ENCODE measurements at regions of chr1 and their contacts with region 1.

Region 1: GRCh38 chr1:79197421-79197820 is 190.9 kb upstream of the ADGRL4 start:
- DNase-seq: no peak
- ATAC-seq: no peak
- H3K4me3 ChIP-seq: no peak overlapping the region
- H3K27ac ChIP-seq: no peak overlapping the region
- H3K4me1 ChIP-seq: no peaks in the 10 kb centered on the region
- H3K27me3 ChIP-seq: no peaks in the 10 kb centered on the region
- CTCF ChIP-seq: peak in 4 of 5 experiments; percentile 11 to 35 (median 20)
- POLR2A ChIP-seq: no peak

Region 2: DNA sequence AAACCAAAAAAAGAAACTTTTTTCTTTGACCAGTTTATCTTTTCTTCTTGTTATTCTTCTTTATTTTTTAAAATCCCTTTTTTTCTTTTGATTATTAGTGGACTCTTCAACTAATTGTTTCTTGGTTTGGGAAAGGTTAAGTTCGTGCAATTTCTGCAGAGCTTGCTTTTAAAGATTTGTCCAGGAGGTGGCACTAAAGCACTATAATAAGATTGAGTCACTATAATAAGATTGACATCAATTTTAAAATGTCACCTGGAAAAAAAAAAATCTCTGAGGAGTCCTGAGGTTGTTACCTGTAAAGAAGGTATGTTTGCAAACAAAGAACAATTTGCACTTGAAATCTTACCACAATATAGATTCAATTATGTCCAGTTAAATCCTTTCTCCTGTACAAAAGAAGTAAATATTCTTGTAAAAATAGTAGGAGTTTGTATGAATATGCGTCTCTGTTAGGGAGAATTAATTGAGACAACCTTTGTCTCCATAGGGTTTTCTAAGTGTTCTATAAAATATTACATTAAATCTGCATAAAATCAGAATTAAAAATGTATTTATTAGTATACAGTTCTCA is 357.6 kb before region 1 on chr1:
- in situ Hi-C with region 1: no loop called
- intact Hi-C with region 1: loop called (anchors 5 kb)
- DNase-seq: no peak
- ATAC-seq: no peak
- H3K4me3 ChIP-seq: no peak overlapping the region
- H3K27ac ChIP-seq: no peak overlapping the region
- H3K4me1 ChIP-seq: no peaks in the 10 kb centered on the region
- H3K27me3 ChIP-seq: no peaks in the 10 kb centered on the region
- CTCF ChIP-seq: peak in 3 of 5 experiments; percentile 46 to 57 (median 53)
- POLR2A ChIP-seq: no peak